Activated T-helper 1 cell treated with anti-CD3 and anti-CD28 coated beads, Interleukin-12 subunit alpha, Interleukin-12 subunit beta, Interleukin-2, Interleukin-4 antibody, amounts not matched to agents 30 ng/mL and 10 ng/mL and 1 ng/mL, durations not matched to agents 14 hours and 24 hours and 36 hours (primary cell): ENCODE measurements at regions of chr2 and their contacts with region 1.

Region 1: DNA sequence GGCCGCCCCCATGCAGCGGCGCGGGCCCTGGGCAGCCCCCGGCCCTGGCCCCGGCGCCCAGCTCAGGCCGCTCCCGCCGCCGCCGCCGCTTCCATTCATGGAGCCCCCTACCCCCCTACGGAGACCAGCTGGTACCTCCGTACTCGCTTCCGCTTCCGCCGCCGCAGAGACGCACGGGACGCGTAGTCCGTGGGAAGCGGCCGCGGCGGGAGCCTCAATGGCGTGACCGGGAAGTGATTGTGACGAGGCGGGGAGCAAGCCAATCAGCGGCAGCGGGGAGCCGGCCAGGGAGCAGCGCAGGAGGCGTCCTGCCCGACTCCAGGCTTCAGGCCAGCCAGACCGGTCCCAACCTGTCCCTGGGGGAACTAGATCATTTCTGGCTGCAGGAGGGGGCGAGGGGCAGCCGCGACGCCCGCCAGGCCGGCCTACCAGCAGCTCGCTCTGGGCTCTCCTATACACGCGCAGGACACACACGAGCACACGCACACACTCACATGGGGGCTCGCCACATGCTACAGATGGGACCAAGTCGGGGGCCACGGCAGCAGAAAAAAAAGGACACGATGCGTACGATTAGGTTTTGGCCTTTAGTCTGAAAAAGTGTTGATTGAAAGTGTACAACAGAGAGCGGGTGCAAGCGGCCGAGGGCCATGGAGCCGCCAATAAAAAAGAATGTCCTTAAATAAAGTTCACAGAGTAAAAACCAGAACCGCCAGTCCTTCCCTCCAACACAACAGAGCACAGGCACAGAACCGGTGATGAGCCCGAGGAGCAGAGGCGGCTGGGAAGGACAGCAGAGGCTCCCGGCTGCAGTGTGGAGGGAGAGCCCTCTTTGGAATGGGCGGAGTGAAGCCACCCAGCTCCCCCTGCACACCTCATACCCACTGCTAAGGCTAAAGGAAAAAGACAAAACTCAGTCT is at the start of gene ZNF513:
- DNase-seq: peak; percentile 87
- H3K4me3 Mint-ChIP-seq: peak within 1 kb of the TSS; percentile 92
- H3K27ac Mint-ChIP-seq: peak within 1 kb of the TSS; percentile 96
- H3K4me1 Mint-ChIP-seq: peaks cover 20% of the 10 kb centered on the region
- H3K27me3 Mint-ChIP-seq: no peaks in the 10 kb centered on the region
- total RNA-seq, gene ZNF513: 14.5 and 16.2 TPM in 2 replicates

Region 2: DNA sequence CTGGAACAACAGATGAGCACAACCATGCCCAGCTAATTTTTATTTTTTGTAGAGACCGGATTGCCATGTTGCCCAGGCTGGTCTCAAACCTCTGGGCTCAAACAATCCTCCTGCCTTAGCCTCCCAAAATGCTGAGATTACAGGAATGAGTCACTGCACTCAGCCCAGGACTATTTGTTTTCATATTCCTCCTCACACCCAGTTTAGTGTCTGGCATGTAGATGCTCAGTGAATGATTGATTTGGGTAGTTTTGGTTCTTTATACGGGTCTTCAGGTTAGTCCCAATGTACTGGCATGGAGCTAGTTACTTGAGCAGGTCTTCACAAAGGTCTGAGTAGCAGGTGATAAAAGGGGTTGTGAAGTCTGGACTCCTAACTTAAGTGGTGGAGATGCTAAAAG is 17.0 kb before region 1 on chr2:
- intact Hi-C with region 1: no loop called
- DNase-seq: no peak
- H3K4me3 Mint-ChIP-seq: no peak overlapping the region
- H3K27ac Mint-ChIP-seq: no peak overlapping the region
- H3K4me1 Mint-ChIP-seq: peaks cover 10% of the 10 kb centered on the region
- H3K27me3 Mint-ChIP-seq: no peaks in the 10 kb centered on the region

Region 3: GRCh38 chr2:27409321-27410073 is 28.6 kb after region 1 on chr2 and contains the start of gene PPM1G:
- intact Hi-C with region 1: loop called (anchors 1 kb)
- DNase-seq: peak; percentile 95
- H3K4me3 Mint-ChIP-seq: peak within 1 kb of the TSS; percentile 90
- H3K27ac Mint-ChIP-seq: peak within 1 kb of the TSS; percentile 89
- H3K4me1 Mint-ChIP-seq: peaks cover 29% of the 10 kb centered on the region
- H3K27me3 Mint-ChIP-seq: peaks cover 2% of the 10 kb centered on the region
- total RNA-seq, gene PPM1G: 158 and 160 TPM in 2 replicates

Region 4: GRCh38 chr2:28080911-28081310 is 700.0 kb after region 1 on chr2:
- intact Hi-C with region 1: no loop called
- DNase-seq: no peak
- H3K4me3 Mint-ChIP-seq: no peak overlapping the region
- H3K27ac Mint-ChIP-seq: no peak overlapping the region
- H3K4me1 Mint-ChIP-seq: peaks cover 6% of the 10 kb centered on the region
- H3K27me3 Mint-ChIP-seq: no peaks in the 10 kb centered on the region